Tibial artery (tissue), 4 donors: ENCODE measurements at regions of chr1 and their contacts with region 1.

Region 1: GRCh38 chr1:112083487-112083886 is 94.0 kb upstream of the KCND3 start:
- DNase-seq: no peak
- H3K4me3 ChIP-seq: no peak overlapping the region
- H3K27ac ChIP-seq: no peak overlapping the region
- H3K4me1 ChIP-seq: no peaks in the 10 kb centered on the region
- H3K27me3 ChIP-seq: no peaks in the 10 kb centered on the region
- CTCF ChIP-seq: no peak

Region 2: DNA sequence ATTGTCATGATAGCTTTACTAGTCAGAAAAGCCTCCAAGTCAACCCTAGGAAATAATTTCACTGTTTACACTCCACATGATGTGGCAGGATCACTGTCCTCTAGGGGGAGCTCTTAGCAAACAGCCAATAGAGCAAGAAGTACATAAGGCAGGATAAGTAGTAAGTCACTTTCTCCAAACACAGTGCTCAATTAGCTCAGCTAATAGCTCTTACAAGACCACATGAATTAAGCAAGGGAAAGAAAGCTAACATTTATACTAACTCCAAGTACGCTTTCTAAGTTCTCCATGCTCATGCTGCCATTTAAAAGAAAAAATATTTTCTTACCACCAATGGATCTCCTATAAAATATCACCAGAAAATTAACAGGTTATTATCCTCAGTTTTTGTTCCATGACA is 1052.9 kb before region 1 on chr1:
- intact Hi-C with region 1: loop called (anchors 5 kb)
- DNase-seq: peak in 1 of 2 donors; percentile 30
- H3K4me3 ChIP-seq: no peak overlapping the region
- H3K27ac ChIP-seq: no peak overlapping the region
- H3K4me1 ChIP-seq: no peaks in the 10 kb centered on the region
- H3K27me3 ChIP-seq: no peaks in the 10 kb centered on the region
- CTCF ChIP-seq: peak; percentile 22 to 34